ENCODE measurements at regions of chr14 and their contacts with region 1.

Region 1: GRCh38 chr14:68780358-68781160 is 12.3 kb downstream of the ZFP36L1 start:
- DNase-seq: no peak
- ATAC-seq: 0 out of 3 replicates have a peak, but pooled peaks have one; percentile 2
- H3K4me3 ChIP-seq: peak overlapping the region; percentile 37 to 65 (median 51)
- H3K27ac ChIP-seq: peak overlapping the region; percentile 69
- H3K4me1 ChIP-seq: peaks cover 91% of the 10 kb centered on the region
- H3K27me3 ChIP-seq: no peaks in the 10 kb centered on the region
- CTCF ChIP-seq: no peak
- EP300 ChIP-seq: no peak
- POLR2A ChIP-seq: no peak
- RAD21 ChIP-seq: no peak

Region 2: GRCh38 chr14:68727315-68728047 is 53.1 kb before region 1 on chr14:
- CTCF ChIA-PET with region 1: no interaction called
- POLR2A ChIA-PET with region 1: interaction called, 25 read pairs
- in situ Hi-C with region 1: no loop called
- intact Hi-C with region 1: loop called (anchors 2 kb)
- DNase-seq: no peak
- ATAC-seq: peak; percentile 13; the same call in 2 of the 3 replicates
- H3K4me3 ChIP-seq: peak overlapping the region in 1 of 3 experiments; percentile 14; a peak in 1 of 6 replicates
- H3K27ac ChIP-seq: no peak overlapping the region
- H3K4me1 ChIP-seq: peaks cover 77% of the 10 kb centered on the region
- H3K27me3 ChIP-seq: no peaks in the 10 kb centered on the region
- CTCF ChIP-seq: no peak
- EP300 ChIP-seq: no peak
- POLR2A ChIP-seq: no peak
- RAD21 ChIP-seq: no peak

Region 3: DNA sequence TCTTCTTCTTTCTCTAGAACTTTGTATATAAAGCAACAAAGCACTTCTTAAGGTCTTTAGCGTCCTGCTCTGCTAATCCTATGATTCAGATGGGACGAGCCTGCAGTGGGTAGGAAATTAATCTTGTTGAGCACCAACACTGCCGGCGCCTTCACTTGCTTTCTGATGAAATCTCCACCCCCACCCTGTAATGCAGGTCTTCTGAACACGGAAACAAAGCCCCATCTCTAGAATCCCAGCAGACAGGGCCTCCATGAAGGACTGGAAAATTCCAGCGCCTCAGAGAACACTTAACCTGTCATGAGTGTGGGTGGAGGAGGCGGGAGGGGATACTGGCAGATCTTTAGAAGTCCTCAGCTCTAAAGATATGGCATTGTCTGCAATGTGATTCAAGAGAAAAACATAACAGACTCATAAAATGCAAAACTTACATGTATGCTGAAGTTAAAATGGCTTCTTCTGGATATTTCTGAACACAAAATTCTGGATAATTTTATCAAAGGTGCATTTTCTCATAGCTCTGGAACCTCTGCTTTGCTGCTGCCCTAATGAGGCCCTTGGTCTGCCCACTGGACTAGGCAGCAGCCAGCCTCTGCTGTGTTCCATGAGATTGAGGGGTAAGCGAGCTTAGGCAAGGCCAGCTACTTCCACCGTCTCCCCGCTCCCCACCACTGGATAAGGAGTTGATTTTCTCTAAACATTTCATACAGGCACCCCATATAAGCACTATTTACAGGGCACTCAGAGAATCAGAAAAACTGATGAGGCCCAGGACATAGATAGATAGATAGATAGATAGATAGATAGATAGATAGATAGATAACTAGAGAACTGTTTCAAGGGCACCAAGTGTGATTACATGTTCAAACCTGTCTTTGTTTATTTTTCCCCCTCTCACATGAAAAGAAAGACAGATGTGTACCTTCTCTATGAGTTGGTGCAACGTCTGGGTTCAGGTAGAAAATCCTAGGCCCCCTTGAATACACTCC is 30.8 kb before region 1 on chr14:
- CTCF ChIA-PET with region 1: no interaction called
- POLR2A ChIA-PET with region 1: interaction called, 15 read pairs
- in situ Hi-C with region 1: no loop called
- intact Hi-C with region 1: loop called (anchors 2 kb)
- DNase-seq: no peak
- ATAC-seq: no peak
- H3K4me3 ChIP-seq: no peak overlapping the region
- H3K27ac ChIP-seq: no peak overlapping the region
- H3K4me1 ChIP-seq: peaks cover 71% of the 10 kb centered on the region
- H3K27me3 ChIP-seq: no peaks in the 10 kb centered on the region
- CTCF ChIP-seq: no peak
- EP300 ChIP-seq: no peak
- POLR2A ChIP-seq: no peak
- RAD21 ChIP-seq: no peak

Region 4: GRCh38 chr14:68757618-68758081 is 22.9 kb before region 1 on chr14:
- CTCF ChIA-PET with region 1: no interaction called
- POLR2A ChIA-PET with region 1: interaction called, 39 read pairs
- in situ Hi-C with region 1: no loop called
- intact Hi-C with region 1: loop called (anchors 2 kb)
- DNase-seq: peak; percentile 39
- ATAC-seq: peak; percentile 30
- H3K4me3 ChIP-seq: peak overlapping the region in 2 of 3 experiments; percentile 3 to 60; a peak in 1 of 6 replicates
- H3K27ac ChIP-seq: no peak overlapping the region
- H3K4me1 ChIP-seq: peaks cover 97% of the 10 kb centered on the region
- H3K27me3 ChIP-seq: no peaks in the 10 kb centered on the region
- CTCF ChIP-seq: no peak
- EP300 ChIP-seq: no peak
- POLR2A ChIP-seq: no peak
- RAD21 ChIP-seq: no peak

Region 5: DNA sequence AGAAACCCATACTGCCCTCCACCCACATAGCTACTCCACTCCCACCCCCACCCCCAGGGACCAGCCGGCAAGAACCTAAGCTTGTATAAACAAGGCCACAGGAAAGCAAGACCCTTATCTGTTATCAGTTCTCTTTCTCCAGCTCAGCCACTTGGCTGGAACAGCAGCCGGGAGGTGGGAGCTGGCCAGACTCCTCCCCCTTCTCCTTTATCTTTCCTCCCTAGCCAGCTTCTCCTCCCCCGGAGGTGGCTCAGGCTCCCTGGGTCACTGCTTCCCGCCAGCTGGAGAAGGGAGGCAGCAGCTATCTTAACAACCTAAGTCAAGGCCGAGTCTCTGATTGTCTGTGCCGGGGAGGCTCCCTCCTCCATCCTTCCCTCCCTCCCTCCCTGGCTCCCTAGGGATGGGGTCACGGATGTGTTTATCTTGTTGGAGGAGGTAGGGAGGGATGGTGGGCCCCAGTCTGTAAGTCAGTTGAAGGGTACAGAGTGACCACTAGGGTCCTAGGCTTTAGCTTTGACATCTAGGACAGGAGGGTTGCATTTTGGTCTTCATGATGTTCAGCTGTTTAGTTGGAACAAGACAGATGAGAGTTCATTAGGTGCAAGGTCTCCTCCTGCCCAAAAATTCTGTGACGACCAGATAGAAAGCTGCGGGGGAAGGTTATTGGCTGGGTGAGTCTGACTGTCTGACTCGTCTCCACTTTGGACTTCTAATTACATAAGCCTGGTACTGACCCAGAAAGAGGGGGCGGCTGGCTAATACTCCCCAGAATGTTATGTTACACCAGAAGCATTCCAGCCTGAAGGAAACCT is 17.4 kb before region 1 on chr14:
- CTCF ChIA-PET with region 1: no interaction called
- POLR2A ChIA-PET with region 1: interaction called, 39 read pairs
- in situ Hi-C with region 1: no loop called
- intact Hi-C with region 1: loop called (anchors 2 kb)
- DNase-seq: peak; percentile 69
- ATAC-seq: peak; percentile 77
- H3K4me3 ChIP-seq: peak overlapping the region in 2 of 3 experiments; percentile 3 to 41; a peak in 1 of 6 replicates
- H3K27ac ChIP-seq: no peak overlapping the region
- H3K4me1 ChIP-seq: peaks cover 83% of the 10 kb centered on the region
- H3K27me3 ChIP-seq: no peaks in the 10 kb centered on the region
- CTCF ChIP-seq: no peak
- EP300 ChIP-seq: peak in 1 of 2 experiments; percentile 38; a peak in 1 of 4 replicates
- POLR2A ChIP-seq: no peak
- RAD21 ChIP-seq: no peak

Region 6: GRCh38 chr14:69079183-69079742 is 298.7 kb after region 1 on chr14:
- CTCF ChIA-PET with region 1: no interaction called
- POLR2A ChIA-PET with region 1: no interaction called
- in situ Hi-C with region 1: no loop called
- intact Hi-C with region 1: no loop called
- DNase-seq: no peak
- ATAC-seq: no peak
- H3K4me3 ChIP-seq: no peak overlapping the region
- H3K27ac ChIP-seq: no peak overlapping the region
- H3K4me1 ChIP-seq: peaks cover 21% of the 10 kb centered on the region
- H3K27me3 ChIP-seq: no peaks in the 10 kb centered on the region
- CTCF ChIP-seq: no peak
- EP300 ChIP-seq: no peak
- POLR2A ChIP-seq: no peak
- RAD21 ChIP-seq: no peak

Measured in HepG2 (cell line).